Activated T-helper 1 cell treated with anti-CD3 and anti-CD28 coated beads, Interleukin-12 subunit alpha, Interleukin-12 subunit beta, Interleukin-2, Interleukin-4 antibody, amounts not matched to agents 30 ng/mL and 10 ng/mL and 1 ng/mL, durations not matched to agents 14 hours and 24 hours and 36 hours (primary cell): ENCODE measurements at regions of chr1 and their contacts with region 1.

Region 1: GRCh38 chr1:161486806-161487741 is 18.2 kb upstream of the FCGR2A start:
- DNase-seq: peak; percentile 18
- H3K4me3 Mint-ChIP-seq: no peak overlapping the region
- H3K27ac Mint-ChIP-seq: no peak overlapping the region
- H3K4me1 Mint-ChIP-seq: peaks cover 16% of the 10 kb centered on the region
- H3K27me3 Mint-ChIP-seq: peaks cover 54% of the 10 kb centered on the region

Region 2: DNA sequence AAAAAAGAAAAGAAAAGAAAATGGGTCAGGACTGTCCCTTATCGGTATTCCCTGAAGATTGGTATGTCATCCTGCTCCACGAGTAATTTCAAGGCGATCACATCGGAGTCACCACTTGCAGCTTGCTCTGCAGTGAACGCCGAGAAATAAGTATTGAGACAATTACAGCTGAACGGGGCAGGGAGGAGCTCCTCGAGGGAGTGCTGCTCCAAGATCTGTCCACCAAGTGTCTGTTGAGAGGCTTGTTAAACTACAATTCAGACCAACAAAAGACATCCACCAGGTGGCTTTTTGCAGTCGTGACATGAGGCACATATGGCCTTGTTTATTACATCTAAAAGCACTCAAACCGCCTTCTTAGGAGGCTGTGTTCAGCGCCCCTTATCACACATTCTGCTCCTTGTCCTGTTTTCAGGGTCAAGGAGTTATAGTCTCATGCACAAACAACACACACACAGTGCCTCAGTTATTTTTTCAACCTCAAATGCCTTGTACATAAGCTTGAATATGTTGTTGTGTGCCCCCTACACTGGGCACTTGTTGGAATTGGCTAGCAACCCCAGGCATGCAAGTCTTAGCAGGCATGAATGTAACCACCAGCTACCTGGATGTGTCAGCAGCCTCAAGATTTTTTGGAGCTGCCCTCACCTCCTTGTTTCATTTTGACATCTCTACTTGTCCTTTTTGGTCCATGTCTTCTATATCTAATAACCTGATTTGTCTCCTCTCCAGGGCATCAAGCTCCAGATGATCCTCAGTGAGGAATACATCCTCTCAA is 762.4 kb before region 1 on chr1:
- intact Hi-C with region 1: no loop called
- DNase-seq: no peak
- H3K4me3 Mint-ChIP-seq: no peak overlapping the region
- H3K27ac Mint-ChIP-seq: peak overlapping the region; percentile 31
- H3K4me1 Mint-ChIP-seq: peaks cover 21% of the 10 kb centered on the region
- H3K27me3 Mint-ChIP-seq: no peaks in the 10 kb centered on the region

Region 3: GRCh38 chr1:161473363-161473762 is 13.7 kb before region 1 on chr1:
- intact Hi-C with region 1: no loop called
- DNase-seq: no peak
- H3K4me3 Mint-ChIP-seq: no peak overlapping the region
- H3K27ac Mint-ChIP-seq: no peak overlapping the region
- H3K4me1 Mint-ChIP-seq: peaks cover 10% of the 10 kb centered on the region
- H3K27me3 Mint-ChIP-seq: peaks cover 14% of the 10 kb centered on the region

Region 4: GRCh38 chr1:161738627-161739287 is 251.7 kb after region 1 on chr1:
- intact Hi-C with region 1: loop called (anchors 1 kb)
- DNase-seq: peak; percentile 54
- H3K4me3 Mint-ChIP-seq: no peak overlapping the region
- H3K27ac Mint-ChIP-seq: peak overlapping the region; percentile 20
- H3K4me1 Mint-ChIP-seq: peaks cover 41% of the 10 kb centered on the region
- H3K27me3 Mint-ChIP-seq: peaks cover 29% of the 10 kb centered on the region

Region 5: GRCh38 chr1:161827786-161828185 is 340.7 kb after region 1 on chr1:
- intact Hi-C with region 1: no loop called
- DNase-seq: no peak
- H3K4me3 Mint-ChIP-seq: no peak overlapping the region
- H3K27ac Mint-ChIP-seq: no peak overlapping the region
- H3K4me1 Mint-ChIP-seq: no peaks in the 10 kb centered on the region
- H3K27me3 Mint-ChIP-seq: no peaks in the 10 kb centered on the region